ENCODE measurements at regions of chr14 and their contacts with region 1.

Region 1: GRCh38 chr14:74109369-74109768 is 24.6 kb downstream of the LIN52 start:
- DNase-seq: no peak
- H3K4me3 ChIP-seq: no peak overlapping the region
- H3K27ac ChIP-seq: no peak overlapping the region
- H3K4me1 ChIP-seq: peaks cover 0 to 10% (median 2%) of the 10 kb centered on the region in 4 donors
- H3K27me3 ChIP-seq: no peaks in the 10 kb centered on the region
- CTCF ChIP-seq: no peak

Region 2: DNA sequence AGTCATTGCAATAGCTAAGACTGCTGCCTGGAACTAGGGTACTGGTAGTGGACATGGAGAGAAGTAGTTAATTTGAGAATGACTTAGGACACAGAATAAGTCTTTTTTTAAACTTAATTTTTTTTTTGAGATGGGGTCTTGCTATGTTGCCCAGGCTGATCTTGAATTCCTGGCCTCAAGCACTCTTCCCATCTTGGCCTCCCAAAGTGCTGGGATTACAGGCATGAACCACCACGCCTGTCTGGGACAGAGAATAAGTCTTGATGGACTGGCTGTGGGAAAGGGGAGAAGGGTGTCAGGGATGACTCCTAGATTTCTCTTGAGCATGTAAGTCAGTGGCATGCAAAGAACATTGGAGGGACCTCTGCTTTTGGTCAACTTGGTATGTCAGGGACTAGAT is 18.3 kb after region 1 on chr14:
- intact Hi-C with region 1: no loop called
- DNase-seq: no peak
- H3K4me3 ChIP-seq: no peak overlapping the region
- H3K27ac ChIP-seq: no peak overlapping the region
- H3K4me1 ChIP-seq: no peaks in the 10 kb centered on the region
- H3K27me3 ChIP-seq: no peaks in the 10 kb centered on the region
- CTCF ChIP-seq: no peak

Region 3: DNA sequence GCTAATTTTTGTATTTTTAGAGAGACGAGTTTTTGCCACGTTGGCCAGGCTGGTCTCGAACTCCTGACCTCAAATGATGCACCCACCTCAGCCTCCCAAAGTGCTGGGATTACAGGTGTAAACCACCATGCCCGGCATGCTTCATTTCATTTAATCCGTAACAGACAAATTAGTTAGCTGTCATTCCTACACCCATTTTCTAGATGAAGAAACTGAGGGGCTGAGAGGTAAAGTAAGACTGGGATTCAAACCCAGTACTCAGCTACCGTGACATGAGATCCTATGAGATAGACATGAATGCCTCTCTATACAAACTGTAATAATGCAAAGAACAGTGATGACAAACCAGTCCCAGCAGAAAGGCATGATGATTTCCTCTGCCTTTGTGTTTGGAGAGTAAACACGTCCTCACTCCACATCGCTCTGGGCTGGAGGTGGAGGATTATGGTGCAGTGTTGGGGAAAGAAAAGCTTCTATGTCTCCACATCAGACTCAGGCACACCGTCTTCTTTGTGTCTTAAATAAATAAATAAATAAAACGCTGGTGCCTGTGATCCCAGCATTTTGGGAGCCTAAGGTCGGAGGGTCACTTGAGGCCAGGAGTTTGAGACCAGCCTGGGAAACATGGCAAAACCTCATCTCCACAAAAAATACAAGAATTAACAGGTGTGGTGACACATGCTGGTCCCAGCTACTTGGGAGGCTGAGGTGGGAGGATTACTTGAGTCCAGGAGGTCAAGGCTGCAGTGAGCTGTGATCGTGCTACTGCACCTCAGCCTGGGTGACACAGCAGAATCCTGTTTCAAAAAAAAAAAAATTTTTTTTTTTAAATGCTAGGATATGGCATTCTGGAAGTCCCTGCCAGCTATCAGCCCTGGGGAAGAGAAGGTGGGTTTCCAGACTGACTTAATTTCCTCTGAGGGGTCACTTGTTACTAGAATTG is 140.3 kb after region 1 on chr14:
- intact Hi-C with region 1: loop called (anchors 5 kb)
- DNase-seq: no peak
- H3K4me3 ChIP-seq: no peak overlapping the region
- H3K27ac ChIP-seq: no peak overlapping the region
- H3K4me1 ChIP-seq: peaks cover 0 to 5% (median 1%) of the 10 kb centered on the region in 4 donors
- H3K27me3 ChIP-seq: peaks cover 0 to 53% of the 10 kb centered on the region in 2 donors
- CTCF ChIP-seq: no peak

Region 4: GRCh38 chr14:74324931-74325361 is 215.6 kb after region 1 on chr14:
- intact Hi-C with region 1: no loop called
- DNase-seq: no peak
- H3K4me3 ChIP-seq: no peak overlapping the region
- H3K27ac ChIP-seq: no peak overlapping the region
- H3K4me1 ChIP-seq: no peaks in the 10 kb centered on the region
- H3K27me3 ChIP-seq: peaks cover 0 to 16% of the 10 kb centered on the region in 2 donors
- CTCF ChIP-seq: peak; percentile 26 to 47

Region 5: DNA sequence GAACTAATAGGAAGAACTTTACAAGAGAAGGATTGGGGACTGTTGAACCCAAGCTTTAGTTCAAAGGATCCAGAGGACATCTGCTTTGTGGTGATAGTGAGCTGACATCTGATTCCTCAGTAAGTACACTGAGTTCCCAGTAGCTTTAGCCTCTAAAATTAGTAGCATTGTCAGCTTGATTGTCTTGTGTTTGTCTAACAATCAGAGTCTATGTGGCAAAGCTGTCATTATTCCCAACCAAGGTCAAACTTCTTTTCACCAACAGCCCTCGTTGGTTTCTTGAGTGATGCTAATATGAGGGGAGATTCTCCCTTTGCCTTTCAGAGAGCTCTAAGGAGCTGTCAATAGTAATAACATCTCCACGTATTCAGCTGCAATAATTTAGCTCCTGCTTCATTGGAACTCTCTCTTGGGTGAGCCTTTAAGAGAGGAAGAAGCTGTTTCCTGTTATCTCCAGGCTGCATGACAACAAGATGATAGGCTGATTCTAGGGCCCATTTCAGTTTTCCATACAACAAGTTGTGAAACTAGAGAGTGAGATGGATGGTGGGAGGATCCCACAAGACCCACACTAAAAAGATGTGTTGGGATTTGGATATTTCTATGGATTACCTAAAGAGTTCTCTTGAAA is 1825.7 kb after region 1 on chr14:
- intact Hi-C with region 1: loop called (anchors 10 kb)
- DNase-seq: no peak
- H3K4me3 ChIP-seq: no peak overlapping the region
- H3K27ac ChIP-seq: no peak overlapping the region
- H3K4me1 ChIP-seq: no peaks in the 10 kb centered on the region
- H3K27me3 ChIP-seq: no peaks in the 10 kb centered on the region
- CTCF ChIP-seq: no peak